ENCODE measurements at regions of chr5 and their contacts with region 1.

Region 1: GRCh38 chr5:54517174-54518092 is at the start of gene SNX18:
- DNase-seq: peak; percentile 92 to 93
- ATAC-seq: peak; percentile 87 to 95 (median 93)
- H3K4me3 ChIP-seq: peak within 1 kb of the TSS; percentile 52 to 100 (median 98)
- H3K27ac ChIP-seq: peak within 1 kb of the TSS; percentile 95 to 99 (median 97)
- H3K4me1 ChIP-seq: peaks cover 4 to 45% (median 39%) of the 10 kb centered on the region in 9 donors
- H3K27me3 ChIP-seq: no peaks in the 10 kb centered on the region
- CTCF ChIP-seq: peak; percentile 95 to 100 (median 98)
- total RNA-seq, gene SNX18: 15.3 to 31.0 (median 22.1) TPM

Region 2: DNA sequence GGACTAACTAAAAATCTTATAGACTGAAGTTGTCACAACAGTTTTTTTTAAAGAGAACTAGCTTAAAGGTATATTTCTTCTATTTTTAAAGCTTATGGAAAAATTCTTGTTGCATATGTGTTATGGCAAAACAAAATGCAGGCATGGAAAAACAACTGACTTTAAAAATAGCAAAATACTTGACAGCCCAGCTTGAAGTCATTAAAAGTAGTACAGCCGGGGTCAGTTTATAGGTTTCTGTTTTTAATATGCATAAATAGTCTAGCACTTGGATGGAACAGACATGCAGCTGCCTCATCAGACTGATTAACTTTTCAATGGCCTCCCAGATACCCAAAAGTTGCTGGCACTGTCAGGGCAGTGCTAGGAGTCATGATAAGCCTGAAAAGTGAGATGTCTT is 184.7 kb before region 1 on chr5:
- intact Hi-C with region 1: no loop called
- DNase-seq: no peak
- ATAC-seq: no peak
- H3K4me3 ChIP-seq: no peak overlapping the region
- H3K27ac ChIP-seq: no peak overlapping the region
- H3K4me1 ChIP-seq: peaks cover 0 to 6% (median 0%) of the 10 kb centered on the region in 9 donors
- H3K27me3 ChIP-seq: no peaks in the 10 kb centered on the region
- CTCF ChIP-seq: no peak

Region 3: GRCh38 chr5:54437418-54437817 is 80.0 kb before region 1 on chr5:
- intact Hi-C with region 1: no loop called
- DNase-seq: no peak
- ATAC-seq: no peak
- H3K4me3 ChIP-seq: no peak overlapping the region
- H3K27ac ChIP-seq: no peak overlapping the region
- H3K4me1 ChIP-seq: peaks cover 0 to 7% (median 0%) of the 10 kb centered on the region in 9 donors
- H3K27me3 ChIP-seq: no peaks in the 10 kb centered on the region
- CTCF ChIP-seq: no peak

Region 4: DNA sequence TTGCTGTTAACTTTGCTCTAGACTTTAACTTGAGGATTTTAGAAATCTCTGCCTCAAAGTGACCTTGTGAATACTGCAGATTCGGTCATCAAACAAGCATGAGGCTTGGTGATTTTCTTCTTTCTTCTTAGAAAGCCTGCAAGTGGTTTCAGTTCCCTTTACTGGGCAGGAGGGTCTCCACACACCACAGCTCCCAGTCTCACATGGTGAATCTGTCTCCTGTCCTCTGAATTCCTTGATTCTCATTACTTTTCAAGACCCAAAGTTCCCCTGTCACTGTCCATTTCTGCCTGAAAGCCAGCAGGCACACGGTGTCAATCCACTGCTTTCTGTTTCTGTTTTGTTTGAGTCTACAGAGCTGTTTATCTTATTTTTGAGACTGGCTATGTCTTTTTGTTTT is 47.8 kb before region 1 on chr5:
- intact Hi-C with region 1: no loop called
- DNase-seq: no peak
- ATAC-seq: peak in 6 of 8 donors; percentile 29 to 67 (median 44)
- H3K4me3 ChIP-seq: peak overlapping the region; percentile 1 to 43 (median 19)
- H3K27ac ChIP-seq: peak overlapping the region in 8 of 10 donors; percentile 15 to 76 (median 66)
- H3K4me1 ChIP-seq: peaks cover 3 to 28% (median 15%) of the 10 kb centered on the region in 9 donors
- H3K27me3 ChIP-seq: no peaks in the 10 kb centered on the region
- CTCF ChIP-seq: no peak

Region 5: DNA sequence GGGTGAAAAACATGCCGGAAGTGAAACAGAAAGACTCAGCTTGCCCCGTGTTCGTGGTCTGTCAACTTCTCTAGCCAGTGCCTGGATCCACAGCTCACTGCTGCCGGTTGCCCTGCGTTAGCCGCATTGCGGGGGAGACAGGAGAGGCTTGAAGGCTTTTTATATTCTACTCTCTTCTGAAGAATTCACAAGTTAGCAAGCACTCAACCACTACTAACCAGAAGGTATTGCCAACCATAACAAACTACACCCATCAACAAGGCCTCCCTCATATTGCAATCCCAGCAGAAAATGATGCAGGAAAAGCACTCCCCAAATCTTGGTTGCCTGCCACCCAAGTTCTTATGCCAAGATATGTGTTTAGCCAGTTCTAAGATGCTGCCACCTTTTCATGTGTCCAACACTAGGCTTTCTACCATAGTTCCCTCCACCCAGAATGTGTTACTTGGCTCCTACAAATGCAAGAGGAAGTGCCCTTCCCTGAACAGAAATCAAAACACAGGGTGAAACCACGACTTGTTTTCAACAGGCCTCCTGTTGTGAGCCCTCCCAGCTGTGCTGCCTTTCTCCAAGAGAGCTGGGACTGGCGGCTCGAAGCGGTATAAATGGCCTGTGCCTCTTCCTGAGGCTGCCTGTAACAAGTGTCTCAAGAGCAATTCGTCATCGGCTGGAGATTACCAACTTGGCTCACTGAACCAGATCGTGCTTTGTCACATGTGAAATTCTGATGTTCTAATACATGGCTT is 129.1 kb after region 1 on chr5:
- intact Hi-C with region 1: loop called in 7 of 10 experiments (anchors 1 to 5 kb)
- DNase-seq: peak; percentile 83
- ATAC-seq: peak; percentile 91 to 96 (median 93)
- H3K4me3 ChIP-seq: peak overlapping the region in 4 of 10 donors; percentile 10 to 24 (median 21)
- H3K27ac ChIP-seq: peak overlapping the region; percentile 5 to 87 (median 70)
- H3K4me1 ChIP-seq: peaks cover 15 to 51% (median 35%) of the 10 kb centered on the region in 9 donors
- H3K27me3 ChIP-seq: no peaks in the 10 kb centered on the region
- CTCF ChIP-seq: no peak

Region 6: DNA sequence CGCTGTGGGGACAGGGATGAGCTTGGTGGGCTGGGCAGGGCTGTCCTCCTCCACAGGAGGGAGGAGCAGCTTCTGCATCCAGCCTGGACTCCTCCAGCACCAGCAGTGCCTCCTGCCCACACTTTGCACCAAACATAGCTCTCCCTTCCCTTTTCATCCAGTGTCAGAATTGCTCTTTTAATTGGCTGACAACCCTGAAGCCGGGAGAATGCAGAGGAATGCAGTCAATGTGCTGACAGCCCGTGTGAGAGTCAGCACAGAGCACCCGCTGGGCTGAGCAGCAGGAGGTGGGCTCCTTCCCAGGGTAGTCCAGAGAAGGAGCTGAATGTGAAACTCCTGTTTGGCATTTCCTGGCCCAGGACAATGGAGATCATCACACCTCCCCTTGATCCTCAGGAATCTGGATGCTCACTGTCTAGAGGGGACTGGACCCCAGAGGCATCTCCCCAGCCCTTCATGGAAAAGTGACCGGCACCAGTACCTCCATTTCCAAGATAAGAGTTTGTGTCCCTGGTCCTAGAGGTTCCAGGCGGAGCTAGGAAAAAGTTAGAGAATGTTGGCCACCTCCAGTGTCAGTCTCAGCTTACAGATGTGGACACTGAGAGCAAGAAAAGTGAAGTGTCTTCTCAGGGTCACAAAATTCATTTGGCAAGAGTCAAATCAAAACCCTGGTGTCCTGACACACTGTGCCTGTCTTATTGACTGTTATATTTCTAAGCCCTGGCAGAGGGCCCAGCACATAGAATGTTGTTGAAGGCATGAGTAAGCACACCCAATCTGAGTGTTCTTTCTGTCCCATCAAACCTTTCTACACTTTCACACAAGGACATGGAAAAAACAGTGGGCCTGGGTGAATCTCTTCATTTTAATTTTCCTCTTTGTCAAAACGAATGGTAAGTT is 202.2 kb after region 1 on chr5:
- intact Hi-C with region 1: loop called in 3 of 10 experiments (anchors 5 to 10 kb)
- DNase-seq: peak; percentile 42 to 59
- ATAC-seq: peak; percentile 78 to 93 (median 88)
- H3K4me3 ChIP-seq: no peak overlapping the region
- H3K27ac ChIP-seq: peak overlapping the region; percentile 34 to 89 (median 75)
- H3K4me1 ChIP-seq: peaks cover 5 to 48% (median 24%) of the 10 kb centered on the region in 9 donors
- H3K27me3 ChIP-seq: no peaks in the 10 kb centered on the region
- CTCF ChIP-seq: peak in 3 of 9 donors; percentile 7 to 23 (median 21)

Region 7: DNA sequence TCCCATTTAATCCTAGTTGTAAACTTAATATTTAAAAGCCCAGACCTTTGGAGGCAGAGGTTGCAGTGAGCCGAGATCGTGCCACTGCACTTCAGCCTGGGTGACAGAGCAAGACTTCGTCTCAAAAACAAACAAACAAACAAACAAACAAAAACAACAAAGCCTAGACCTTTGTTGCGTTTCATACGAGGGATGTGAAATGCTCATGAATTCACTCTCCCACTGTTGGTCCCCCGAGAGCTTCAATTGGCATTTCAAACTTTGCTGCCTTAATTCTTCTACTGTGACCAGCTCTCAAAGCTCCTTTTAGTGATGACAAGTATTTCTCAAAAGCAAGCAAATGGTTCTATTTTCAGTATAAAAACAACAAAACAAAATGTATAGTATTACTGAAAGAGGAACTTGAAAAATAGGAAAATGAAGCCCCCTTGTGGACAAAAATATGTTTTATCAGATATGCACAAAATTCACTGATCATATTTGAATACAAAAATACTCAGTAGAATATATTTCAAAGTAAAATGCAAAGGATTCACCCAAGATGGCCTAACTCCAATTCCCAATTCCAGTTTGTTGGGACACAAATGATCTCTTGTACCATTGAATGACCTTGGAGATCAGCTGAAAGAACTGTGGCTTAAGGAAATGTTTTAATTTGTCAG is 327.6 kb after region 1 on chr5:
- intact Hi-C with region 1: loop called (anchors 1 to 5 kb)
- DNase-seq: no peak
- ATAC-seq: peak in 2 of 8 donors; percentile 37 to 78
- H3K4me3 ChIP-seq: peak overlapping the region in 7 of 10 donors; percentile 10 to 46 (median 36)
- H3K27ac ChIP-seq: peak overlapping the region in 3 of 10 donors; percentile 1 to 69 (median 13)
- H3K4me1 ChIP-seq: peaks cover 0 to 9% (median 5%) of the 10 kb centered on the region in 9 donors
- H3K27me3 ChIP-seq: no peaks in the 10 kb centered on the region
- CTCF ChIP-seq: peak; percentile 52 to 83 (median 72)

Region 8: DNA sequence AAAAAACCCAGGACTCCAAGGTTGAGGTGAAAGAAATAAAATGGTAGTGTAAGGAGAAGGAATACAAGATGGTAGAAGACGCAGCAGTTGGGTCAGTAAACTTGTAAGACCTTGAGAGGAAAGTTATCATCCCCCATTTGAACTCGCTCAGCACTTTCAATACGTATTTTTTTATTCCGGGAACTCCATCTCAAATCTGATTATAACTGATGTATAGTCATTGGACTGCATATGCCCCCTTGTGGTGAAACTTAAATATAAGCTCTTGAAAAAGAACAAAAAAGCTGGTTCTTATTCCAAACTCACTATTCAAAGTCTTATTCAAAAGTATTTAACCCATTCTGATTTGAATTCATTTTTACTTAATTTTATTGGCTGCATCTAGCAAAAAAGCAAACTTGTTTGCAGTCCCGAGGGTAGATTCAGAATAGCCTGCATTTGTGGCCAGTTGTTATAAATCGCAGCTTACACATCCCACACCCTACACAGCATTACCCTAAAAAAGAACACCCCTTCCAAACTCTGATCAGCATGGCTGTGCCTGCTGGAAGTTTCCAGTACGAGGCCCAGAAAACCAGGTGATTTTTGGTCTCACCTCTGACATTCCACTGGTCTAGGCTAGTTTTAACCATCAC is 350.0 kb after region 1 on chr5:
- intact Hi-C with region 1: loop called (anchors 1 to 5 kb)
- DNase-seq: no peak
- ATAC-seq: peak in 4 of 8 donors; percentile 31 to 55 (median 47)
- H3K4me3 ChIP-seq: peak overlapping the region in 6 of 10 donors; percentile 13 to 31 (median 25)
- H3K27ac ChIP-seq: no peak overlapping the region
- H3K4me1 ChIP-seq: peaks cover 0 to 7% (median 0%) of the 10 kb centered on the region in 9 donors
- H3K27me3 ChIP-seq: no peaks in the 10 kb centered on the region
- CTCF ChIP-seq: peak; percentile 56 to 82 (median 65)